Endothelial cell of umbilical vein (primary cell): ENCODE measurements at regions of chr5 and their contacts with region 1.

Region 1: DNA sequence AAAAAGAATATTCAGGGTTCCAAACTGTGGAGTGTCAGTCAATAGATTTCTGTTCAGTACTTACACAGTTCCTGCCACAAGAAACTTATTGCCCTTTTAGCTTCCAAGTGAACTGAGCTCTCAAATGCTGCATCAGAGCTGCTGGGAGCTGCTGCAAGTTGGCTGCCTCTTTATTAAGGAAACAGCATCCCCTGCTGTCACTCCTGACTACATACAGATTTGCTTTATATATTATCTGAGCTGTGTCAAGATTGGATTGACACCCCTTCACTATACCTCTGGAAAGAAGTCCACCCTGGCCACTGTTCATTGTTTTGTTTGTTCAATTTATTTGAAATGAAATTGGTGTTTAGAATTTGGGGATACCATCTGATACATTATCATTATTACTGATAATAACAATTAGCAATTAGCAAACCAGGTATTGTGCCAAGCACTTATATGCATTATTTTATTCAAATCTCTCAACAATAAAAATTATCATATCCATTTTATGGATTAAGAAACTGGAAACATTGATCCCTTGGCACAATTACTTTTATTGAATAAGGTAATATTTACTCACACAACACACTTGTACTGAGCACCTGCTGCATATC is 16.4 kb upstream of the C5orf58 start:
- DNase-seq: peak; percentile 73
- H3K4me3 ChIP-seq: no peak overlapping the region
- H3K27ac ChIP-seq: no peak overlapping the region
- H3K4me1 ChIP-seq: peaks cover 30% of the 10 kb centered on the region
- H3K27me3 ChIP-seq: no peaks in the 10 kb centered on the region
- CTCF ChIP-seq: peak; percentile 66 to 69
- POLR2A ChIP-seq: no peak

Region 2: GRCh38 chr5:168987543-168988300 is 1228.6 kb before region 1 on chr5:
- CTCF ChIA-PET with region 1: interaction called, 16 read pairs
- POLR2A ChIA-PET with region 1: no interaction called
- dilution Hi-C with region 1: no loop called
- intact Hi-C with region 1: loop called (anchors 1 kb)
- DNase-seq: peak; percentile 67
- H3K4me3 ChIP-seq: no peak overlapping the region
- H3K27ac ChIP-seq: no peak overlapping the region
- H3K4me1 ChIP-seq: no peaks in the 10 kb centered on the region
- H3K27me3 ChIP-seq: peaks cover 0 to 6% of the 10 kb centered on the region in 2 experiments
- CTCF ChIP-seq: peak; percentile 67 to 81
- POLR2A ChIP-seq: no peak

Region 3: DNA sequence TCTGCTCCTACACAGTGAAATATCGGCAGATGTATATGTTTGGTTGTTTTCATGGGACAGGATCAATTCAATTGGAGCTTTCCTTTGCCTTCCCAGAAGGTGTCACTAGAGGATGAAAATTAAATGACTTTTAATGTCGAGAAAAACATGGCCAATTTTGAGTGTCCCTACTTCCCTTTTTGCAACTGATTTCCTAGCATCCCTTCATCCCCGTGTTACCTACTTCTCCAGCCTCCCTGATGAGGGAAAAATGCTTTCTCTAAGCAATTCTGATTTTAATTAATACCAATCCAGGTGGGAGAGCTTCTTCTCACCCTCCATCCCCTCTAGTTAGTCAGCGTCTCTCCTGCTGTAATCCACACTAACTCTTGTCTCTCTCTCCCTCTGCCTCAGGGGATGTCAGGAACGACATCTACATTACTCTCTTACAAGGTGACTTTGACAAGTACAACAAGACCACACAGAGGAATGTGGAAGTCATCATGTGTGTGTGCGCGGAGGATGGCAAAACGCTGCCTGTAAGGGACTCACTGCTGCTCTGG is 514.4 kb before region 1 on chr5:
- CTCF ChIA-PET with region 1: interaction called, 29 read pairs
- POLR2A ChIA-PET with region 1: no interaction called
- dilution Hi-C with region 1: no loop called
- intact Hi-C with region 1: loop called (anchors 1 kb)
- DNase-seq: peak; percentile 45
- H3K4me3 ChIP-seq: no peak overlapping the region
- H3K27ac ChIP-seq: no peak overlapping the region
- H3K4me1 ChIP-seq: peaks cover 28% of the 10 kb centered on the region
- H3K27me3 ChIP-seq: no peaks in the 10 kb centered on the region
- CTCF ChIP-seq: peak; percentile 25 to 42
- POLR2A ChIP-seq: no peak

Region 4: GRCh38 chr5:169814522-169814921 is 401.8 kb before region 1 on chr5:
- CTCF ChIA-PET with region 1: no interaction called
- POLR2A ChIA-PET with region 1: no interaction called
- dilution Hi-C with region 1: no loop called
- intact Hi-C with region 1: no loop called
- DNase-seq: no peak
- H3K4me3 ChIP-seq: no peak overlapping the region
- H3K27ac ChIP-seq: no peak overlapping the region
- H3K4me1 ChIP-seq: no peaks in the 10 kb centered on the region
- H3K27me3 ChIP-seq: peaks cover 0 to 2% of the 10 kb centered on the region in 2 experiments
- CTCF ChIP-seq: no peak
- POLR2A ChIP-seq: no peak

Region 5: GRCh38 chr5:169988947-169989346 is 227.4 kb before region 1 on chr5:
- CTCF ChIA-PET with region 1: interaction called, 9 read pairs
- POLR2A ChIA-PET with region 1: no interaction called
- dilution Hi-C with region 1: no loop called
- intact Hi-C with region 1: loop called (anchors 2 kb)
- DNase-seq: peak; percentile 75
- H3K4me3 ChIP-seq: no peak overlapping the region
- H3K27ac ChIP-seq: peak overlapping the region; percentile 95
- H3K4me1 ChIP-seq: peaks cover 26% of the 10 kb centered on the region
- H3K27me3 ChIP-seq: no peaks in the 10 kb centered on the region
- CTCF ChIP-seq: no peak
- POLR2A ChIP-seq: no peak

Region 6: DNA sequence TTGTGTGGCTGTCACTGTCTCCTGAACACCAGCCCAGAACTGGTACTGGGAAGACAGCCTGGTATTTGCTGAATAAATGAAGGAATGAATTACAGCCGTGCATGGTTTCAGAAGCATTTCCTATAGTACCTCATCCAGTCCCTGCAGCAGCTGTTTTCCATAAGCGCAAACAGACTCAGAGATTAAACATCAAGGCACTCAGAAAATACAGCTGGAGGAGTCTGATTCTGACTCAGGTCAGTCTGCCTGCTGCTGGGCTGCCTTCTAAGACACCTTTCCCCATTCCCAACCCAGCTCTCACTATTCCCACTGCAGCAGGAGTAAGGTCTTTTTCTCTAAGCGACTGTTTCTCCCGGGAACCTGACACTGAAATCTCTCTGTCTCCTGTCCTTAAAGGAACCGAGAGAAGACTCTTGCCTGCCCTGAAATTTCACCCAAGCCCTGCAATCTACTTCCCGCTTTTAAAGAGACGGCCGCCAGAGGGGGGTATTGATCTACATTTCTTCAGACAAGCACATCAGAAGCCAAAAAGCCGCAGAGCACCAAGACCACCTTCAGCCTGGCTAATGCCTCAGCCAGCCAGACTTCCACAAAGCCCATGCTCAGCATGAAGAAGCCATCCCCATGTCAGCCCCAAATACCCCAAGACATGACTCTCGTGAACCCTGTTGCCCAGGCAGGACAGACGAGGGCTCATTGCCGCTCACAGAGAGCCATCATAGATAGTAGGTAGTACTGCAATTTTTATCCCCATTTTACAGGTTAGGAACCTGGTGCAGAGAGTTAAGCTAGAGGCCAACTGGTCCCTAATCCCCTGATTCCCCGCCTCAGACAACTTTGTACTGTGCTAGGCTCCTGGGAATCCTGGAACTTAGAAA is 116.1 kb before region 1 on chr5:
- CTCF ChIA-PET with region 1: interaction called, 173 read pairs
- POLR2A ChIA-PET with region 1: no interaction called
- dilution Hi-C with region 1: no loop called
- intact Hi-C with region 1: loop called (anchors 1 kb)
- DNase-seq: peak; percentile 80
- H3K4me3 ChIP-seq: no peak overlapping the region
- H3K27ac ChIP-seq: no peak overlapping the region
- H3K4me1 ChIP-seq: peaks cover 19% of the 10 kb centered on the region
- H3K27me3 ChIP-seq: no peaks in the 10 kb centered on the region
- CTCF ChIP-seq: peak; percentile 63 to 71
- POLR2A ChIP-seq: no peak

Region 7: DNA sequence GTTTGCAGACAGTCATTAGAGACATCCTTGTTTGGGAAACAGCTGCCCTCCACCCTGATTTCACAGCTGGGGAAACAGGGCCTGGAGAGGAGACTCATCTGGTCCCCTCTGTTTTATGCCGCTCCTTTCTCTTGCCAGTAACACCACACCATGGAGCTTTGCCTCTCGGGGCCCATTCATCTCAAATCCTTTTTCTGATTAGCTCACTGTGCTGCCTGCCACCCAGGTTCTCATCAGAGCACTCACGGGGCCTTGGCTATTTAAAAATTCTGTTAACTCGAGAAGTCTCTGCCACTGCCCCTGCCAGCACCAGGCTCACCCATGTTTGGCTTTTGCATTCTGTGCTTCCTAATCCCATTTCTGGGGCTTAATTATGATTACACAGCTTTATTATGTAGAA is 20.4 kb before region 1 on chr5:
- CTCF ChIA-PET with region 1: interaction called, 13 read pairs
- POLR2A ChIA-PET with region 1: no interaction called
- dilution Hi-C with region 1: no loop called
- intact Hi-C with region 1: no loop called
- DNase-seq: no peak
- H3K4me3 ChIP-seq: no peak overlapping the region
- H3K27ac ChIP-seq: no peak overlapping the region
- H3K4me1 ChIP-seq: no peaks in the 10 kb centered on the region
- H3K27me3 ChIP-seq: peaks cover 10% of the 10 kb centered on the region in 2 experiments
- CTCF ChIP-seq: no peak
- POLR2A ChIP-seq: no peak